Caco-2 (cell line): ENCODE measurements at regions of chr2 and their contacts with region 1.

Region 1: DNA sequence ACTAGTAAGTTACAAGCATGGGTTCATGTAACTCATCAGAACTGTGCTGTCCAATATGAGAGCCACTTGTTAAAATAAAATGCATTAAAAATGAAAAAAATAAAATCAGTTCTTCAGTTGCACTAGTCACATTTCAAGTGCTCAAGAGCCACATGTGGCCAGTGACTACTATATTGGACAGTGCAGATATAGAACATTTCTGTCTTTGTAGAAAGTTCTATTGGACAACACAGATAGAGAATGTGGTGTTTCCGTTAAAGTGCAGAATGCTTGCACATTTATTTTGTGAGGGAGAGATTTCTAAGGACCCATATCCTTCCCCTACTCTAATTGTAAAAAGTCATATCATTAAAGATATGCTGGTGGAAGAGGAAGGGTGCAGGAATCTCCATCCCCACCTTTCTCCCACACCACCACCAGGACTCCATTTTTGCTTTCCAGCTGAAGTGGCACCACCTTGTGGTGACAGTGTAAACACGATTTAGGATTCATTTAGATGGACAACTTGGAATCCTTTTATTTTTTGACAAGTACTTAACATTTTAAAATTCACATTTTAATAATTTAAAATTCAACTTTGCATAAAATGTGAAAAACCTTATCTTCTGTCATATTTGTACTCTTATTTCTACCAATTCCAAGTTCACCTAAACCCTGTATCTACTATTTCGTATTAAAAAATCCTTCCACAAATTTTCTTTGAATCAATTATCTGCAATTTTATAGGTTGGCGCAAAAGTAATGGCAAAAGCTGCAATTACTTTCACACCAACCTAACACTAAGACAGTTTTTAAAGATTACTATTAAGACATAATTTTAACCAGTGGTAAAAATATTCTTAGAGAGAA is 9.4 kb upstream of the CD302 start:
- DNase-seq: peak; percentile 53 to 61
- H3K4me3 ChIP-seq: no peak overlapping the region
- H3K4me3 Mint-ChIP-seq: no peak overlapping the region
- H3K27ac Mint-ChIP-seq: no peak overlapping the region
- H3K4me1 ChIP-seq: no peaks in the 10 kb centered on the region
- H3K4me1 Mint-ChIP-seq: no peaks in the 10 kb centered on the region
- H3K27me3 ChIP-seq: no peaks in the 10 kb centered on the region
- H3K27me3 Mint-ChIP-seq: no peaks in the 10 kb centered on the region
- CTCF ChIP-seq: peak; percentile 78 to 82

Region 2: GRCh38 chr2:159571540-159572260 is 235.7 kb before region 1 on chr2:
- CTCF ChIA-PET with region 1: no interaction called
- POLR2A ChIA-PET with region 1: no interaction called
- intact Hi-C with region 1: no loop called
- DNase-seq: no peak
- H3K4me3 ChIP-seq: no peak overlapping the region
- H3K4me3 Mint-ChIP-seq: no peak overlapping the region
- H3K27ac Mint-ChIP-seq: no peak overlapping the region
- H3K4me1 ChIP-seq: peaks cover 8% of the 10 kb centered on the region; the same call in 1 of the 2 replicates
- H3K4me1 Mint-ChIP-seq: no peaks in the 10 kb centered on the region
- H3K27me3 ChIP-seq: no peaks in the 10 kb centered on the region
- H3K27me3 Mint-ChIP-seq: no peaks in the 10 kb centered on the region
- CTCF ChIP-seq: no peak

Region 3: DNA sequence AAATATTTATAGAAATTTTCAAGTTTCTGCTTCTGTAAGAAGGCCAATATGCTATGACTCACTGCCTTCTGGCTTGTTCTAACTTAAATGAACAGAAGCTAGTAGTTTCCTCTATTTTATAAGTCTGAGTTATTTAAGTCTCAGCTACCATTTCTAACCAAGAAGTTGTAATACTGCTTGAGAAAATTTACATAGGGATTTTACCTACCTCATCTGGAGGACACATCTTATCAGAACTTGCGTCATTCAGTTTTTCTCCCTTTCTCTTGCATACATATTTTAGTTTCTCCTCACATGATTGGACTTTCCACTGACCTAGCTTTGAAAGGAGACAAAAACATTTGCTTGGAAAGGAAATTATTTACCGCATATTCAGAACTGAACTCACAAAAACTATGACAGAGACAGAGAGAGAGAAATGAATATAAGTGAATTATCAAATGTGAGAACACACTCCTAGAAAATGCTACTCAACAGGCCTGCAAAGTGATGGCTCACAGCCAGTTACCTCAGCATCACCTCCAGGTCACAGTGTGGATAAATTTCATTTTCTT is 71.7 kb after region 1 on chr2:
- CTCF ChIA-PET with region 1: no interaction called
- POLR2A ChIA-PET with region 1: no interaction called
- intact Hi-C with region 1: no loop called
- DNase-seq: no peak
- H3K4me3 ChIP-seq: no peak overlapping the region
- H3K4me3 Mint-ChIP-seq: no peak overlapping the region
- H3K27ac Mint-ChIP-seq: no peak overlapping the region
- H3K4me1 ChIP-seq: no peaks in the 10 kb centered on the region
- H3K4me1 Mint-ChIP-seq: no peaks in the 10 kb centered on the region
- H3K27me3 ChIP-seq: no peaks in the 10 kb centered on the region
- H3K27me3 Mint-ChIP-seq: no peaks in the 10 kb centered on the region
- CTCF ChIP-seq: no peak

Region 4: DNA sequence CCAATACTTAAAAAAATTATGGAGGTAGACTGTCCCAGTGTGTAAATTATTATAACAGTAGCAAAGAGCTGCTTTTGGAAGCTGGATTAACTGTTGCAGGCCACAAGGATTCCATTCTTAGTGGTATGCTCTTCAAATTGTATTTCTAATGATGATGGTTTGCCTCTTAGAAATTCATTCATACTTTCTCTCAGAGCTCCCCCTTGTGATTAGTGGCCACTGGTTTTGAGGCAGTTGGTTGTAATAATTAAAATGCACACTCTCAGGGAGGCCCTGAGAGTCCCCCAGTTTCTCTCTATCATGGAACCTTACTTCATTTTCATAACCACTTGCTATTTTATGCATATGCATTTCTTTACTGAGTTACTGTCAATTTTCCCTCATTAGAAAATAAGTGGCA is 132.5 kb after region 1 on chr2:
- CTCF ChIA-PET with region 1: no interaction called
- POLR2A ChIA-PET with region 1: no interaction called
- intact Hi-C with region 1: loop called (anchors 5 kb)
- DNase-seq: peak in 1 of 2 experiments; percentile 52
- H3K4me3 ChIP-seq: no peak overlapping the region
- H3K4me3 Mint-ChIP-seq: no peak overlapping the region
- H3K27ac Mint-ChIP-seq: no peak overlapping the region
- H3K4me1 ChIP-seq: 0 out of 2 replicates have a peak, but pooled peaks cover 3% of the 10 kb centered on the region
- H3K4me1 Mint-ChIP-seq: no peaks in the 10 kb centered on the region
- H3K27me3 ChIP-seq: no peaks in the 10 kb centered on the region
- H3K27me3 Mint-ChIP-seq: no peaks in the 10 kb centered on the region
- CTCF ChIP-seq: peak; percentile 52 to 57

Region 5: GRCh38 chr2:159968279-159968900 is 161.0 kb after region 1 on chr2:
- CTCF ChIA-PET with region 1: no interaction called
- POLR2A ChIA-PET with region 1: no interaction called
- intact Hi-C with region 1: loop called (anchors 5 kb)
- DNase-seq: peak; percentile 48 to 63
- H3K4me3 ChIP-seq: no peak overlapping the region
- H3K4me3 Mint-ChIP-seq: no peak overlapping the region
- H3K27ac Mint-ChIP-seq: no peak overlapping the region
- H3K4me1 ChIP-seq: no peaks in the 10 kb centered on the region
- H3K4me1 Mint-ChIP-seq: no peaks in the 10 kb centered on the region
- H3K27me3 ChIP-seq: no peaks in the 10 kb centered on the region
- H3K27me3 Mint-ChIP-seq: no peaks in the 10 kb centered on the region
- CTCF ChIP-seq: peak; percentile 67 to 71